ENCODE measurements at regions of chr1 and their contacts with region 1.

Region 1: DNA sequence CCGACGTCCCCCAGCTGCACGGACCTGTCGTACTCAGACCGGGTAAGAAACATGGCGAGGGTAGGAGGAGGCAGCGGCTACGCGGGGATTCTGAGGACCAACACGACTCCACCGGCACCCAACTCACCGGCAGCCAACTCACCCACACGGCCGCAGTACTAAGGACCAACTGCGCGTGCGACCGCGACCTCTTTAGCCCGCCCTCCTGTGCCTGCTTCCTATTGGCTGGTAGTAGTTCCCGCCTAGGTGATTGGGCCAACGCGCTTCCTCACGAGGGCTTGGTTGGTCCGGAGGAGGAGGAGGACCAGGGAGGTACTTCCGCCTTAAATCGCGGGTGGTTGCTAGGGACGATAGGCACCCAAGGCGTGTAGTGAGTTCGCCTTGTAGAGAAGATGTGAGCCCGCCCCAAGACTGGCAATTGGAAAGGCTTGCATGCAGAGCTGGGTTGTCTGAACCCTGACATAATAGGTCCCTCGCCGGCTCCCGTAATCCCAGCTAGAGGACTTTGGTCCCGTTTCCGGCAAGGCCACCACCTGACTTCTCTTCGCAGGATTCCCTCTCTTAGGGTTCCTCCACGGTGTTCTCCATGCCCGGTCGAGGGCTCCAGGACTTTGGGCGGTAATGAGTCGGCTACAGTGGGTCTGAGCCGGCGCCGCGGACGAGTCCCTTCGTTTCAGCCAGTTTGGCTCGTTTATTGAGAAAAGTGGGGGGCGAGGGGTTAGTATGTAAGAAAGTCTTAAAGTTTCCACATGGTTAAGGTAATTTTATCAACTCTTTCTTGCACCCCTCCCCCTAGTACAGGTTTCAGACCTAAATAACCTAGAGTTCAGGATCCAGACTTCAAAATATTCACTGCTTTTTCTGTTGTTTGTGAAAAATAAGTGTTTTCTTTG is at the start of gene PSMA5:
- DNase-seq: peak; percentile 98
- H3K4me3 Mint-ChIP-seq: peak within 1 kb of the TSS; percentile 94
- H3K27ac Mint-ChIP-seq: peak within 1 kb of the TSS; percentile 97
- H3K4me1 Mint-ChIP-seq: peaks cover 33% of the 10 kb centered on the region
- H3K27me3 Mint-ChIP-seq: no peaks in the 10 kb centered on the region
- total RNA-seq, gene PSMA5: 181 to 202 TPM

Region 2: GRCh38 chr1:109099938-109100773 is 326.4 kb before region 1 on chr1:
- CTCF ChIA-PET with region 1: no interaction called
- intact Hi-C with region 1: loop called (anchors 1 kb)
- DNase-seq: peak; percentile 98
- H3K4me3 Mint-ChIP-seq: peak overlapping the region; percentile 99
- H3K27ac Mint-ChIP-seq: peak overlapping the region; percentile 97
- H3K4me1 Mint-ChIP-seq: peaks cover 23% of the 10 kb centered on the region
- H3K27me3 Mint-ChIP-seq: peaks cover 2% of the 10 kb centered on the region

Region 3: GRCh38 chr1:109282952-109283747 is 143.4 kb before region 1 on chr1 and contains the start of gene PSRC1:
- CTCF ChIA-PET with region 1: interaction called, 3 read pairs
- intact Hi-C with region 1: loop called (anchors 1 kb)
- DNase-seq: peak; percentile 94
- H3K4me3 Mint-ChIP-seq: peak within 1 kb of the TSS; percentile 94
- H3K27ac Mint-ChIP-seq: peak within 1 kb of the TSS; percentile 89
- H3K4me1 Mint-ChIP-seq: peaks cover 6% of the 10 kb centered on the region
- H3K27me3 Mint-ChIP-seq: no peaks in the 10 kb centered on the region
- total RNA-seq, gene PSRC1: 19.3 to 21.5 TPM

Region 4: DNA sequence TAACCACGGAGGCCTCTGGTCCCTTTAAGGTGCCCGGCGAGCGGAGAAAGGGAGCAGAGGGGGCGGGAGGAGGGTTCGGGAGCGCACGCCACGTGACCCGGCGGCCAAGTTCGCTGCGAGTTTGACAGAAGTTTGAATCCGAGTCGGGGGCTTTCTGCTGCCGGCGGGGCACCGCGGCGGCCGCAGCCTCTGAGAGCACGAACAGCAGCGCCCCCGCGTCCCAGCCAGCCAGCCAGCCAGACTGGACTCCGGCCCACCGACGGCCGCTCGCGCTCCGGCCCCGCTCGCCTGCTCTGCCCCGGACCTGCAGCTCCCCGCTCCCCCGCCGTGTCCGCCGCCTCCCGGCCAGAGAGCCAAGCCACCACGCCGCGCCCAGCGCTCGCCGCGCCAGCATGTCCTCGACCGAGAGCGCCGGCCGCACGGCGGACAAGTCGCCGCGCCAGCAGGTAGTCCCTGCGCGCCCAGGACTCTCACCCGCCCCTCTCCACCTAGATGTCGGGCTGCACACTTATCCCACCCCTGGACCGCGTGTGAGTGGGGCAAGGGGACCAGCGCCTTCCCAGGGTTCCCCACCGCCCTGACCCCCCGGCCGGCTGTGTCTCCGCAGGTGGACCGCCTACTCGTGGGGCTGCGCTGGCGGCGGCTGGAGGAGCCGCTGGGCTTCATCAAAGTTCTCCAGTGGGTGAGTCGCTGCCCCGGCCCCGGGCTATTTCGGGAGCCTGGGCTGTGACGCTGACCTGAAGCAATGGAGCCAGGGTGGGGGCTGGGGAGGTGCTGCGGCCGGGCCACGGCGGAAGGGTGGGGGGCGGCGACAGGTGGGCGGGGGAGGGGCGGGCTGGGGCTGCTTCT is 40.2 kb after region 1 on chr1 and contains the start of gene SYPL2:
- CTCF ChIA-PET with region 1: no interaction called
- intact Hi-C with region 1: loop called (anchors 5 kb)
- DNase-seq: peak; percentile 20
- H3K4me3 Mint-ChIP-seq: peak within 1 kb of the TSS; percentile 53
- H3K27ac Mint-ChIP-seq: no peak within 1 kb of the TSS
- H3K4me1 Mint-ChIP-seq: peaks cover 11% of the 10 kb centered on the region
- H3K27me3 Mint-ChIP-seq: peaks cover 56% of the 10 kb centered on the region
- total RNA-seq, gene SYPL2: 0.05 TPM in 1 of 2 experiments, not detected in the other

Region 5: DNA sequence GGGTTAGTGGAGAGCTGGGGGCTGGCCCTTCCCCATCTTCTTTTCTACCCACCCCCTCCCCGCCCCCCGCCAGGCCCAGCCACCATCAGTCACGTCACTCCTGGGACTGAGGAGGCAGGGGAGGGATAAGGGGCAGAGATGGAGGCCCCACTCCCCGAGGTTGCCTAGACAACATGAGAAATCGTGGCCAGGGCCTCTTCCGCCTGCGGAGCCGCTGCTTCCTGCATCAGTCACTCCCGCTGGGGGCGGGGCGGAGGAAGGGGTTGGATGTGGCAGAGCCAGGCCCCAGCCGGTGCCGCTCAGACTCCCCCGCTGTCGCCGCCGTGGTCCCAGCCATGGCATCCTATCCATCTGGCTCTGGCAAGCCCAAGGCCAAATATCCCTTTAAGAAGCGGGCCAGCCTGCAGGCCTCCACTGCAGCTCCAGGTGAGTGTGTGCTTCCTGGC is 194.3 kb after region 1 on chr1:
- CTCF ChIA-PET with region 1: no interaction called
- intact Hi-C with region 1: loop called (anchors 1 kb)
- DNase-seq: peak; percentile 98
- H3K4me3 Mint-ChIP-seq: peak overlapping the region; percentile 93
- H3K27ac Mint-ChIP-seq: peak overlapping the region; percentile 91
- H3K4me1 Mint-ChIP-seq: peaks cover 57% of the 10 kb centered on the region
- H3K27me3 Mint-ChIP-seq: no peaks in the 10 kb centered on the region